K562 (cell line): ENCODE measurements at regions of chr7 and their contacts with region 1.

Region 1: DNA sequence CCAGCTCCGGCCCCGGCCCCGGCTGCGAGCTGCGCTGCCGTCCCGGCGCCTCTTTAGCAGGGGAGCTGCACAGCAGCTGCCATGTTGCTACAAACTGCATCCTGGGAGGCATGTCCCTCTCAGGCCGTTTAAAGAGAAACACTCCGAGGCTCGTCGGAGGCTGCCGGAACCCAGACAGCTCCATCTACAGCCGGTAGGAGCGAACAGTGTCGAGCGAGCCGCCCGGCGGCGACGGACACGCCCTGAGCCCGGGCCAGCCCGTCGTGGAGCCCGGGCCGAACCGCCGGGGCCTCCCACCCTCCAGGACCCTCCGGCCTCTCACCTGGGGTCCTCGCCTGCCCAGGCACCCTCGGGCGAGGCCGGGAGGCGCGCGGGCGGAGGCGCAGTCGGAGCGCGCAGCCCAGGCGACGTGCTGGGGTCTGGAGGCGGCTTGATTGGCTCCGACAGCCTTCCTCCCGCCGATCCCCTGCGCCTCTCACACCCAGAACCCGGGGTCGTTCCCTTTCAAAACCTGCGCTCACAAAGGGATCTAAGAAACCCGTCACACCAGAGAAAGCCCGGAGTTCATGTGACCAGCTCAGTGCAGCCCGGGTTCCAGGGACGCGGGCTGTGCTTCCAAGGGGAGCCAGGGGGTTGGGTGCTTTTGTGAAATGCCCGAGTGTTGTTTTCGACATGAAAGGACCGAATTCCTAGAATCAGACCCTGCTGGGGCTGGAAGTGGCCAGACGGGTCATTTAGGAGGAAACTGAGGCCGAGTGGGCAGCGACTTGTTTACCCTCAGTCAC is at the start of gene ZNF777:
- DNase-seq: peak in 3 of 4 experiments; percentile 88 to 93 (median 92)
- ATAC-seq: peak; percentile 98
- H3K4me3 ChIP-seq: peak within 1 kb of the TSS; percentile 64
- H3K27ac ChIP-seq: peak within 1 kb of the TSS; percentile 66
- H3K4me1 ChIP-seq: peaks cover 17 to 20% of the 10 kb centered on the region in 2 experiments
- H3K27me3 ChIP-seq: peaks cover 4 to 7% of the 10 kb centered on the region in 2 experiments; a peak in 3 of 5 replicates
- CTCF ChIP-seq: peak; percentile 67 to 88 (median 81)
- EP300 ChIP-seq: 0 out of 2 replicates have a peak, but pooled peaks have one; percentile 31
- POLR2A ChIP-seq: peak; percentile 76
- RAD21 ChIP-seq: peak; percentile 31 to 40
- polyA plus RNA-seq, gene ZNF777: 0.11 to 0.13 TPM

Region 2: GRCh38 chr7:149444287-149444686 is 16.4 kb before region 1 on chr7:
- CTCF ChIA-PET with region 1: no interaction called
- POLR2A ChIA-PET with region 1: interaction called, 28 read pairs
- in situ Hi-C with region 1: no loop called
- intact Hi-C with region 1: no loop called
- DNase-seq: peak in 1 of 4 experiments; percentile 34
- ATAC-seq: peak; percentile 71
- H3K4me3 ChIP-seq: no peak overlapping the region
- H3K27ac ChIP-seq: no peak overlapping the region
- H3K4me1 ChIP-seq: peaks cover 2 to 4% of the 10 kb centered on the region in 2 experiments; a peak in 1 of 5 replicates
- H3K27me3 ChIP-seq: no peaks in the 10 kb centered on the region
- CTCF ChIP-seq: no peak
- EP300 ChIP-seq: no peak
- POLR2A ChIP-seq: no peak
- RAD21 ChIP-seq: no peak